ENCODE measurements at regions of chr12 and their contacts with region 1.

Region 1: GRCh38 chr12:114408886-114409851 is 3.2 kb upstream of the TBX5 start:
- DNase-seq: no peak
- H3K4me3 Mint-ChIP-seq: no peak overlapping the region
- H3K27ac Mint-ChIP-seq: peak overlapping the region; percentile 67
- H3K4me1 Mint-ChIP-seq: peaks cover 9% of the 10 kb centered on the region
- H3K27me3 Mint-ChIP-seq: peaks cover 86% of the 10 kb centered on the region

Region 2: DNA sequence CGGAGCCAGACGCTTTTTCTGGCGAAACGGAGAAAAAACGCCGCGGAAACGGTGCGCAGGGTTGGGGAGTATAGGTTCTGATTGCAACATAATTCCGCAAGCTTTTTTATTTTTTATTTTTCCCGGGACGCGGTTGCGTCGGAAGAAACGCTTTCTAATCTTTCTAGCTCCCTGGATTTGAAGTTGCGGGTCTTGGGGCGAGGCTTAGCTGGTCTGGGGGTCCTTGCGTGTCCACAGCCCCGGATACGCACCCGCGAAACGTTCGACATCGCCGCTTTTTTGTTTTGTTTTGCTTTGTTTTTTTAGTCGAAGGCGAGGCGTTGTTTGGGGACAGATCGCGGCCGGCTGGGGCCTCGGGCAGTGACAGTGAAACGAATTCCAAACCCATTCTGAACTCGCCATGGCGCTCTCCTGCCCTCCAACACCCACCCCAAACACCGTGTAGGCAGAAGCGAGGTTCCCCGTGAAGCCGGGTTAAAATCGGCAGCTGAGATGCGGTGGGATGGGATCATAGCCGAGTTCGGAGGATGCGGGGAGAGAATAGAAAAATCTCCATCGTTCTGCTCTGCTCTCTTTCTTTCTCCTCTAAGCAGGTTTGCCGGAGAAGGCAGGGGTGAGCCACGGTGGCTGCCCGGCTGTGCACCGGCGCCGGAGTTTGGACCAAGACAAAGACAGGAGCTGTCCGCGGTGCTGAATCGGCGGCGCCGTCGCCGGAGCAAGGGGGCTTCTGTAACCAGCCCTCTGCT is 929.4 kb before region 1 on chr12:
- intact Hi-C with region 1: loop called (anchors 5 kb)
- DNase-seq: peak; percentile 10
- H3K4me3 Mint-ChIP-seq: no peak overlapping the region
- H3K27ac Mint-ChIP-seq: peak overlapping the region; percentile 74
- H3K4me1 Mint-ChIP-seq: peaks cover 5% of the 10 kb centered on the region
- H3K27me3 Mint-ChIP-seq: peaks cover 55% of the 10 kb centered on the region

Region 3: GRCh38 chr12:114320968-114321367 is 88.2 kb before region 1 on chr12:
- intact Hi-C with region 1: no loop called
- DNase-seq: no peak
- H3K4me3 Mint-ChIP-seq: no peak overlapping the region
- H3K27ac Mint-ChIP-seq: no peak overlapping the region
- H3K4me1 Mint-ChIP-seq: no peaks in the 10 kb centered on the region
- H3K27me3 Mint-ChIP-seq: no peaks in the 10 kb centered on the region

Region 4: DNA sequence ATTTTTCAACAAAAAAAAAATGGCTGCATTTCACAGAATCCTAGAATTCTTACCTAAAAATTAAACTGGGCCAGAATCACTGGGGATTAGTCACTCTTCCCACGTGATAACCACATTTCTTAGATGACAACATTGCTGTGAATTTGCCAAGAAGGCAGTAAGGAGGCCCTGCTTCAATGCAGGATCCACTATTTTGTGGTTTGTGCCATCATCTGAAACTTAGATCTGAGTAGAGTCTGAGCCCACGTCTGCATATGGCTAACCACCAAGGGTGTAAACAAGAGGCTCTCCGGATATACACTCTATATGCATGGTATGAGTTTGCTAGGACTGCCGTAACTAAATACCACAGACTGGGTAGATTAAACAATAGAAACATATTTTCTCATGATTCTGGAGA is 21.1 kb after region 1 on chr12:
- intact Hi-C with region 1: no loop called
- DNase-seq: no peak
- H3K4me3 Mint-ChIP-seq: no peak overlapping the region
- H3K27ac Mint-ChIP-seq: no peak overlapping the region
- H3K4me1 Mint-ChIP-seq: no peaks in the 10 kb centered on the region
- H3K27me3 Mint-ChIP-seq: peaks cover 8% of the 10 kb centered on the region

Region 5: GRCh38 chr12:114457620-114458019 is 48.5 kb after region 1 on chr12:
- intact Hi-C with region 1: no loop called
- DNase-seq: no peak
- H3K4me3 Mint-ChIP-seq: no peak overlapping the region
- H3K27ac Mint-ChIP-seq: no peak overlapping the region
- H3K4me1 Mint-ChIP-seq: no peaks in the 10 kb centered on the region
- H3K27me3 Mint-ChIP-seq: peaks cover 9% of the 10 kb centered on the region

Region 6: DNA sequence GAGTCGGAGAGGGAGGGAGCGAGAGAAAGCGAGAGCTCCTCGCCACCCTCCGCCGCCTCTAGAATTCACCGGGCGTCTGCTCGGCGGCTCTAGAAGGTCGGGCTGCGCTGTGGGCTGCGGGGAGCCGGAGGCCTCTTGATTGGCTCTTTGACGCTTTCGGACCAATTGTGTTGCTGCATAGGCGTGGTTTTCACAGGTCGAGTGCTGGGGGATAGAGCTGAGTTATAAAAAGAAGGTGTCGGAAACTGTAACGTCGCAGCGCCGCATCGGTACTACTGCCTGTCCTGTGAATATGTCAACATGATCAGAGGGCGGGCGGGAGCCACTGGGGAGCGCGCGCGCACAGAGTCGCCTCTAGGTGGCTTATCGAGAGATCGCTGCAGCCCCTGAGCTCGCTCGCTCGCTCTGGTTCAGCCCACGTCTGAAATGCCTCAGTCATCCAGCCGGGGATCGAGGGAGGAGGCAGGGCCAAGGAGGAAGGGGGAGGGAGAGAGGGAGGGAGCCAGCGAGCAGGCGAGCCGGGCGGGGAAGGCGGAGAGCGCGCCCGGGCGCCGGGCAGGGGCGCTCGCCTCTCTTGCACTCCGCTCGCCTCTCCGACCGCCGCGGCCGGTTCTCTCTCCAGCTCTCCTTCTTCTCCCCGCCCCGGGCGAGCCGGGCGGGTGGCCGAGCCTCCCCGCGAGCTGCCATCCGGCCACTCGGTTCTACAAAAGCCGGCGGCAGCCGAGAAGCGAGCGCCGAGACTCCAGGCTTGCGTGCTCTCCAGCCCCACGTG is 275.1 kb after region 1 on chr12 and contains the start of gene TBX3:
- intact Hi-C with region 1: loop called (anchors 5 kb)
- DNase-seq: peak; percentile 1
- H3K4me3 Mint-ChIP-seq: peak within 1 kb of the TSS; percentile 33
- H3K27ac Mint-ChIP-seq: peak within 1 kb of the TSS; percentile 81
- H3K4me1 Mint-ChIP-seq: peaks cover 13% of the 10 kb centered on the region
- H3K27me3 Mint-ChIP-seq: peaks cover 84% of the 10 kb centered on the region
- total RNA-seq, gene TBX3: not detected in 2 replicates